Posterior cingulate gyrus (tissue), 11 donors: ENCODE measurements at regions of chr19 and their contacts with region 1.

Region 1: GRCh38 chr19:55503502-55504251 is 15.4 kb downstream of the SSC5D start:
- DNase-seq: peak; percentile 90 to 99 (median 94)

Region 2: DNA sequence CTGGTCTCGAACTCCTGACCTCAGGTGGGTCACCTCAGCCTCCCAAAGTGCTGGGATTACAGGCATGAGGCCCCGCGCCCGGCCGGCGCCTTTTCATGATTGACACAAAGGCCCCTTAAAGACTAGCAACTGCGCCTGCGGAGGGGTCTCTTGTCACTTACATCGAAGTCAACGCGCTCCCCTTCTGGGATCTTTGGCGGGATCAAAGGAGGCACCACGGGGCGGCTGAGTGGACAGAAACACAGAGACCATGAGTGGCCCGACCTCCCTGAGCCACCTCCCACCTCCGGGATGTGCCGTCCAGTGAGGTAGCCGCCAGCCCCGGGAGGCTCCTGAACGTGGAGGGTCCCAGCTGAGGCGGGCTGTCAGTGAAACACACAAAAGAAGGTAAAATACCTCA is 362.0 kb before region 1 on chr19:
- intact Hi-C with region 1: loop called (anchors 1 kb)
- DNase-seq: no peak

Region 3: GRCh38 chr19:55467236-55468053 is 36.2 kb before region 1 on chr19:
- intact Hi-C with region 1: loop called (anchors 5 kb)
- DNase-seq: peak in 5 of 10 donors; percentile 56 to 94 (median 70)

Region 4: DNA sequence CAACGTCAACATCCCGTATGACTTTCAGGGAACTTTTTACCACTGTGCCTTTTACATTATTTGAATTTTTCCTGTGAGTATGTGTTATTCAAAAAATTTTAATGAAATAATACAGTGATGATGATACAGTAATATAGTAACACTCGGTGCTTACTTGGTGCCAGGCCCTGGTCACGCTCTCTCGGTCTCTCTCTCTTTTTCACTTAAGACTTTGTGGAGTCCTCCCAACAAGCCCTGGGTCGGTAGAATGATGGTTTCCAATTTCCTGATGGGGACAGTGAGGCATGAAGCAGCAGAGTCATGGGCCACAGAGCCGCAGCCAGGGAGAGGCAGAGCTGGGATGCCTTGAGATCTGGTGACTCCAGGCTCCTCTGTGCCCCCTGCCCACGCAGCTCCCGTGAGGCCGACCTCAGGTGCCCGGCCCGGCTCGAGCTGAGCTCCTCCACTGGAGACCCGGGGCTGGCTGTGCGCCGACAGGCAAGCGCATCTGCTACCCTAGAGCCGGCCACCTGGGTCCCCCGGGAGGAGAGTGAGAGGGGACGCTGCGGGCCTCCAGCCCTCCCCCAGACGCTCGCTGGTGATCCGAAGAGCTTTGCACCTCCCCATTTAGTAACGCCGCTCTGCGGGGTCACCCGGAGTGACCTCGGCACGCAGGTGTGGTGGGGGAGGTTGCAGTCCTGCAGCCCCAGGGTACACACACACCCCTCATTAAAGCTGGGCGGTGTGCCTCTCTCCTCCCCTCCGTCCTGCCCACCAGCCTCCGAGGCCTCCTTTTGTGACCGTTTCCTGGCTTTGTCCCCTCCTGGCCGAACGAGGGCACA is 46.0 kb after region 1 on chr19:
- intact Hi-C with region 1: no loop called
- DNase-seq: peak in 2 of 10 donors; percentile 77 to 81